PC-3 (cell line): ENCODE measurements at regions of chr10 and their contacts with region 1.

Region 1: GRCh38 chr10:5829267-5829666 is 16.0 kb upstream of the GDI2 start:
- DNase-seq: no peak
- ATAC-seq: no peak
- H3K4me3 ChIP-seq: no peak overlapping the region
- H3K27ac ChIP-seq: no peak overlapping the region
- H3K4me1 ChIP-seq: peaks cover 7% of the 10 kb centered on the region; the same call in 1 of the 2 replicates
- H3K27me3 ChIP-seq: no peaks in the 10 kb centered on the region
- CTCF ChIP-seq: no peak

Region 2: GRCh38 chr10:5698062-5698461 is 131.2 kb before region 1 on chr10:
- CTCF ChIA-PET with region 1: interaction called, 15 read pairs
- POLR2A ChIA-PET with region 1: no interaction called
- intact Hi-C with region 1: no loop called
- DNase-seq: no peak
- ATAC-seq: no peak
- H3K4me3 ChIP-seq: no peak overlapping the region
- H3K27ac ChIP-seq: no peak overlapping the region
- H3K4me1 ChIP-seq: no peaks in the 10 kb centered on the region
- H3K27me3 ChIP-seq: no peaks in the 10 kb centered on the region
- CTCF ChIP-seq: no peak

Region 3: GRCh38 chr10:5708356-5708755 is 120.9 kb before region 1 on chr10:
- CTCF ChIA-PET with region 1: no interaction called
- POLR2A ChIA-PET with region 1: no interaction called
- intact Hi-C with region 1: no loop called
- DNase-seq: no peak
- ATAC-seq: no peak
- H3K4me3 ChIP-seq: no peak overlapping the region
- H3K27ac ChIP-seq: no peak overlapping the region
- H3K4me1 ChIP-seq: no peaks in the 10 kb centered on the region
- H3K27me3 ChIP-seq: no peaks in the 10 kb centered on the region
- CTCF ChIP-seq: no peak